Activated naive CD4-positive, alpha-beta T cell treated with anti-CD3 and anti-CD28 coated beads, Interleukin-2, amount 10 ng/mL, durations not matched to agents 7 days and 5 days (primary cell): ENCODE measurements at regions of chr11 and their contacts with region 1.

Region 1: DNA sequence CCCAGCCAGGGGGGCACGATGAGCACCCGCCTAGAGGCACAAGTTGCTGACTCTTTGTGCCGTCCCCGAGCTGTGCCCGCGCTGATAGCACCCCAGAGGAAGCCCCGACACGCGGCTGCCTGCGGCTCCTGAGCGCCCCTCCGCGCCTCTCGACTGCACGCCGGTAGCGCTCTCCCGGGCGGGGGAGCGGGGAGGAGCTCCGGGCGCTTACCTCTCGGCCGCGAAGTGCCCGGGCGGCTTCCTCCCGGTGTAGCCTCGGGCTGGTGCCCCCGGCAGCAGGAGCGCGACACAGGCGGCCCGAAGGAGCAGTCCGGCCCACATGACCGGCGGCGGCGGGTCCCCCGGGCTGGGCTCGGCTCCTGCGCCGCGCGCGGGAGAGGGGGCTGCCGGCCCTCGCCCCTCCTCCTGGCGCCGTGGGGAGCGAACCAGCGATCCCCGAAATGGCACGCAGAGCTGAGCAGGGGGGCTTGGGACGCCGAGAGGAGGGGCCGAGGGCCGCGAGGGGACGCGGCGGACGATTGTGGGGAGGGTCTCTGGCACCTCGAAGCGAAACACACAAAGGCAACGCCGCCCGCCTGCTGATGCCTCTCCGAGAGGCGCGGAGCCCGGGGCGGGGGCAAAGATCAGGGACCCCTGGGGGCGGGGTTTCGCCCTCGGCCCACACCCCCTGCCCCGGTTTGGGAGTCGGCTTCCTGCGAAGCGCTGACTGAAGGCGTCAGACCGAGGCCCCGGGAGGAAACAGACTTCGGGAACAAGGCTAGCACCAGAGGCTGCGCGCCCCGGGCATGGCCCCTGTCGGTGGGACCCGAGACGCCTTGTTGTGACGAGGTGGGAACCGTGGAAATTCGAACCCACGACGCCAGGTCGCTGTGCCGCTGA is at the start of gene VWCE:
- DNase-seq: peak; percentile 81
- H3K4me3 Mint-ChIP-seq: peak within 1 kb of the TSS; percentile 77
- H3K27ac Mint-ChIP-seq: no peak within 1 kb of the TSS
- H3K4me1 Mint-ChIP-seq: peaks cover 37% of the 10 kb centered on the region
- H3K27me3 Mint-ChIP-seq: peaks cover 43% of the 10 kb centered on the region

Region 2: DNA sequence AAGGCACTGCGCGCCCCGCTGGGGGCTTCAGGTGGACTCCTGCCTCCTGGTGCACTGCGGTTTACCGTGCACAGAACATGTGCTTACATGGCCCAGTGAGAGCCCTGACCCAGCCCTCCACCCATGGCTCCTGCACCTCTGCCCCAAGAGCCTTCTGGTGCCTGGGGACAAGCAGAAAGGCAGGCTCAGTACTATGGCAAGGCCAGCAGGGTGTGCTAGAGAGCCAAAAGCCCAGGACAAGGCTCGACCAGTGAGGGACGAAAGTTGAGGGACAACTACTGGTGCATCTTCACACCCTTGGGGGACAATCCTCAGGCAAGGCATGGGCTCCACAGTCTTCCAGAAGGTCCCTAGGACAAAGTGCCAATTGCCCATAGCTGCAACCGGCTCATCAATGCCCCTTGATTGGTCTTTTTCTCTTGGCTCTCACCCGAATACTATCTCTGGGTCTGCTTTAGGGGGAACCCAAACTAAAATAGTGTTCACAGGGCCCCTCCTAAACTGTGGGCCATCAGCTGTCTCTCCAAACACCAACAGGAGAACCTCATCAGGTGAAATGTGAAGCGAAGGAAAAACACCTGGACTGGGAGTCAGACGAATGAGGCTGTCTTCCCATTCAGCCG is 40.4 kb before region 1 on chr11:
- CTCF ChIA-PET with region 1: interaction called, 21 read pairs
- DNase-seq: peak; percentile 80
- H3K4me3 Mint-ChIP-seq: no peak overlapping the region
- H3K27ac Mint-ChIP-seq: no peak overlapping the region
- H3K4me1 Mint-ChIP-seq: no peaks in the 10 kb centered on the region
- H3K27me3 Mint-ChIP-seq: peaks cover 5% of the 10 kb centered on the region